ENCODE measurements at regions of chr4 and their contacts with region 1.

Region 1: DNA sequence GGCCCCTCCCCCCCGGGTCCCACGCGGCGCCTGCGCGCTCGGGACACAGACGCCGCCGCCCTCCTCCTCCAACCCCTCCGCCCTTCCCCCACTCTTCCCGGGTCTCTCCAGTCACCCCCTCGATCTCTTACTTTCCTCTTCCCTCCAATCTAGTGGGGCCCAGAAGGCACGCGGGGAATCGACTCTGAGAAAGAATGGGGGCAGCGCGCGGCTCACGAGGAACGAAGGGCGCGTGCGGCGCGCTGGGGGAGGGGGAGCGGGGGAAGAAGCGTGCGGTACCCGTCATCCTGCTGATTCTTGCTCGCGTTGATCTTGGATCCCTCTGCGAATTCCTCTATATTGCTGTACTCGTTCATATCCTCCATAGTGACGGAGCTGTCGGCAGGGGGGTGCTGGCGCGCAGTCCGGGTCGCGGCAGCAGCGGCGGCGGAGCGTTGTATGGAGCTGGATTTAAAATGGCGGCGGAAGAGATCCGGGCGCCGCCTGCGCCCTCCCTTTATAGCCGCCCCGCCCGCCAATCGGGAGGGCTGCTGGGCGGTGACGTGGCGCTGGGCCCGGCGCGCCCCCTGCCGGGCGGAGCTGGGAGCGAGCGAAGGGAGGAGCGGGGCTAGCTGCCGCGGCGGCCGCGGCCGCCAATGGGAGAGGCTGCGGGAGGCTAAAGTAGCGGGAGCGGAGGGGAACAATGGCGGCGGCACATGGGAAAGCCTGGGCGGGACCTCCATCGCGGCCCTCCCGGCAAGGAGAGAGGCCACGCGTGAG is 1.1 kb downstream of the HNRNPDL start:
- DNase-seq: peak; percentile 96
- H3K4me3 ChIP-seq: peak overlapping the region; percentile 69 to 95 (median 88)
- H3K27ac ChIP-seq: peak overlapping the region; percentile 93 to 97 (median 95)
- H3K4me1 ChIP-seq: peaks cover 0 to 46% (median 44%) of the 10 kb centered on the region in 4 donors
- H3K27me3 ChIP-seq: no peaks in the 10 kb centered on the region
- CTCF ChIP-seq: peak; percentile 48 to 96 (median 74)
- EP300 ChIP-seq: no peak
- POLR2A ChIP-seq: peak; percentile 73 to 82

Region 2: GRCh38 chr4:82284858-82285805 is 144.0 kb before region 1 on chr4:
- intact Hi-C with region 1: loop called (anchors 2 kb)
- DNase-seq: peak; percentile 100
- H3K4me3 ChIP-seq: peak overlapping the region; percentile 24 to 50 (median 44)
- H3K27ac ChIP-seq: peak overlapping the region; percentile 63 to 76 (median 70)
- H3K4me1 ChIP-seq: peaks cover 0 to 5% (median 5%) of the 10 kb centered on the region in 4 donors
- H3K27me3 ChIP-seq: no peaks in the 10 kb centered on the region
- CTCF ChIP-seq: peak; percentile 65 to 98 (median 81)
- EP300 ChIP-seq: no peak
- POLR2A ChIP-seq: no peak

Region 3: DNA sequence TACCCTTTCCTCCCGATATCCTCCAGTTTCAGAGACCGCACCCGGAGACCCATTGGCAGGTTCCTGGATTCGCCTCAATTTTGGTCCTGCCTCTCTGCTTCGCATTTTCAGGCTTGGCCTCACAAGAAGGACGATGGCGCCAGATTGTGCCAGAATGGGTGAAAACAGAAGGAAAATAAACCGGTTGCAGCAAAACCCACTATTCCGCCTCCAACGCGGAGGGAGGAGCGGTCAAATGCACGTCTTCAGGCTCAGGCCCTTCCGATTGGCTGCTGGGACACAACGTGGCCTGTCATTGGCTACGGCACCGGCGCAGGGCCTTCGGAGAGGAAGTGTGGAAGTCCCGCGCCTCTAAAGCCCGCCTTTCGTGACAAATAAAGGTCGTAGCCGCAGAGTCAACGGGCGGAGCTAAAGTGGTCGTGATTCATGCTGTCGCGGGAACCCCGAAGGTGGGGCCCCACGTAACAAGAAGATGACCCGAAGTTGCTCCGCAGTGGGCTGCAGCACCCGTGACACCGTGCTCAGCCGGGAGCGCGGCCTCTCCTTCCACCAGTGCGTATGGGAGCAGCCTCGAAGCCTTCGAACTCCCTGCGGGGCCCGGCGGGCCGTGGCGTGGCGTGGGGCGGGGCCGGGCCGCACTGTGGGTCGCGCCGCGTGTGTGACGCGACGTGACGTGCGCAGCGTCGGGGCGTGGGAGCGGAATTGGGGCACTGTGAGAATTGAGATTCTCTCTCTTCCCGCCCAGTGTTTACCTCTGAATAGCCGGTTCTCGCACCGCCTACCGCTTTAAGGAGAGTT is 471.4 kb after region 1 on chr4 and contains the start of gene THAP9:
- intact Hi-C with region 1: loop called (anchors 2 kb)
- DNase-seq: peak; percentile 100
- H3K4me3 ChIP-seq: peak within 1 kb of the TSS; percentile 54 to 82 (median 74)
- H3K27ac ChIP-seq: peak within 1 kb of the TSS; percentile 94 to 98 (median 98)
- H3K4me1 ChIP-seq: peaks cover 0 to 37% (median 34%) of the 10 kb centered on the region in 4 donors
- H3K27me3 ChIP-seq: no peaks in the 10 kb centered on the region
- CTCF ChIP-seq: no peak
- EP300 ChIP-seq: peak in 2 of 4 donors; percentile 5 to 13
- POLR2A ChIP-seq: peak; percentile 86 to 88
- total RNA-seq, gene THAP9: 3.9 to 7.5 (median 5.3) TPM

Region 4: GRCh38 chr4:83012687-83013419 is 583.7 kb after region 1 on chr4:
- intact Hi-C with region 1: loop called (anchors 2 kb)
- DNase-seq: peak; percentile 99
- H3K4me3 ChIP-seq: peak overlapping the region; percentile 45 to 87 (median 68)
- H3K27ac ChIP-seq: peak overlapping the region; percentile 88 to 97 (median 89)
- H3K4me1 ChIP-seq: peaks cover 0 to 37% (median 33%) of the 10 kb centered on the region in 4 donors
- H3K27me3 ChIP-seq: no peaks in the 10 kb centered on the region
- CTCF ChIP-seq: peak in 3 of 4 experiments; percentile 47 to 62 (median 59)
- EP300 ChIP-seq: peak in 1 of 4 donors; percentile 69
- POLR2A ChIP-seq: peak; percentile 28 to 46

Region 5: GRCh38 chr4:83043801-83044407 is 614.8 kb after region 1 on chr4:
- intact Hi-C with region 1: no loop called
- DNase-seq: no peak
- H3K4me3 ChIP-seq: no peak overlapping the region
- H3K27ac ChIP-seq: no peak overlapping the region
- H3K4me1 ChIP-seq: peaks cover 0 to 5% (median 0%) of the 10 kb centered on the region in 4 donors
- H3K27me3 ChIP-seq: no peaks in the 10 kb centered on the region
- CTCF ChIP-seq: no peak
- EP300 ChIP-seq: no peak
- POLR2A ChIP-seq: no peak

Region 6: DNA sequence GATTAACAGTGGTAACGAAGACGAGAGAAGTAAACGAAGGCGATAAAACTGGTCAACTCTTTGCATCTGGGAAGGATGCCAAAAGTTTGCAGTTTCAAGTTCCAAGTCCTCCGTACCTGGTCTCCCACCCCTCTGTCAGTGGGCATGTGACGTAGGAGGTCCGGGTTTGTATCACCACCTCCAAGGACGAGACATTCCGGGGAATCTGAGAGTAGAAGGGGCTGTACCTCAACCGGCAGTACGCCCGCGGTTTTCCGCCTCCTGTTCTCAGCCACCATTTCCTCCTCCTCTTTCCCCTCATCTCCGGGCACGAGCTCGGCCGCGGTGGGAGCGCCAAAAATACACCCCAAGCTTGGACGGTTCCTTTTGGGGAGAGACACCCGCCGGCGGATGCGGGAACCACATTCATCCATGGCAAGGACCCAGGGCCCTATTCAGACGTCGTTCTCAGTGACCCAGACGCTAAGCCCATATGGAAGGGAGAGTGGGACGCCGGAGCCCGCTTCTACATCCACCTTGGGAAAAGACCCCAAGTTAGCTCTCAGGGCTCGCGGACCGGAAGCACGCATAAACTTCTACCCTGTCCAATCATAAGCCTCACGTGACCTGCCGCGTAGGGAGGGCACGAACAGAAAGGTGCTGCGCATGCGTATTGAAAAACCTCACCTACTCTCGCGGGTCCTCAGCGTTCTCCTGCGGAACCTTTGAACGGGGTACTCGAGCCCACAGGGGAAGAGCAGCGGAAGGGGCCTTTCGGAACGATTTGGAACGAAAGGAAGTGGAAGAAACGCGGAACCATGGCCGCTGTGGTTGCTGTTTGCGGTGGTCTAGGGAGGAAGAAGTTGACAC is 1026.4 kb after region 1 on chr4 and contains the starts of genes HELQ and MRPS18C:
- intact Hi-C with region 1: loop called (anchors 10 kb)
- DNase-seq: peak; percentile 99
- H3K4me3 ChIP-seq: peak within 1 kb of the TSS; percentile 80 to 86 (median 84)
- H3K27ac ChIP-seq: peak within 1 kb of the TSS; percentile 96 to 99 (median 98)
- H3K4me1 ChIP-seq: peaks cover 0 to 32% (median 22%) of the 10 kb centered on the region in 4 donors
- H3K27me3 ChIP-seq: no peaks in the 10 kb centered on the region
- CTCF ChIP-seq: peak in 2 of 4 experiments; percentile 13 to 48
- EP300 ChIP-seq: peak in 1 of 4 donors; percentile 20
- POLR2A ChIP-seq: peak; percentile 45 to 66
- total RNA-seq, gene HELQ: 11.8 to 21.8 (median 18.9) TPM
- total RNA-seq, gene MRPS18C: 8.3 to 36.2 (median 17.4) TPM

Measured in sigmoid colon (tissue), 7 donors.